ENCODE measurements at regions of chr1 and their contacts with region 1.

Region 1: GRCh38 chr1:237864338-237865244 is 26.1 kb downstream of the ZP4 start:
- DNase-seq: peak; percentile 85
- H3K4me3 Mint-ChIP-seq: peak overlapping the region; percentile 68
- H3K27ac Mint-ChIP-seq: peak overlapping the region; percentile 55
- H3K4me1 Mint-ChIP-seq: peaks cover 21% of the 10 kb centered on the region
- H3K27me3 Mint-ChIP-seq: no peaks in the 10 kb centered on the region
- CTCF ChIP-seq: peak; percentile 98

Region 2: GRCh38 chr1:237913362-237913761 is 48.8 kb after region 1 on chr1:
- CTCF ChIA-PET with region 1: interaction called, 6 read pairs
- intact Hi-C with region 1: loop called (anchors 1 kb)
- DNase-seq: no peak
- H3K4me3 Mint-ChIP-seq: no peak overlapping the region
- H3K27ac Mint-ChIP-seq: no peak overlapping the region
- H3K4me1 Mint-ChIP-seq: no peaks in the 10 kb centered on the region
- H3K27me3 Mint-ChIP-seq: no peaks in the 10 kb centered on the region
- CTCF ChIP-seq: no peak

Region 3: DNA sequence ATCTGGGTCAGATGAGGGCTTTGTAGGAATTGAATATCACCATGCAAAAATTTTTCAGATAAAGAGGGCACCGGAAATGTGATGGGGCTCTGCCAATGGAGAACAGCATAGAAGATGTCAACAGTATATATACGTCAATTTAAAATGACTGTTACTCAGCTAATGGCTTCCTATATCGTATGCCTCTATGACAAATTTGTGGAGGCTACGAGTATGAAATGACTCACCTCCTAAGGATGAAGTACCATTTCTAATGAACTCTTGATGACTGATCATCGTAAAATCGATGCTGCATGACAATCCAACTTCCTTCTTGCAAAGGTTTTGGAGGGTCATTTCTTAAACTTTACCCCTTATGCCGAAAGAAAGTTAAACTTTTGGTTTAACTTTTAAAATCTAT is 476.4 kb after region 1 on chr1:
- CTCF ChIA-PET with region 1: no interaction called
- intact Hi-C with region 1: loop called (anchors 10 kb)
- DNase-seq: no peak
- H3K4me3 Mint-ChIP-seq: no peak overlapping the region
- H3K27ac Mint-ChIP-seq: peak overlapping the region; percentile 24
- H3K4me1 Mint-ChIP-seq: peaks cover 21% of the 10 kb centered on the region
- H3K27me3 Mint-ChIP-seq: no peaks in the 10 kb centered on the region
- CTCF ChIP-seq: no peak

Region 4: GRCh38 chr1:238951809-238952208 is 1087.2 kb after region 1 on chr1:
- CTCF ChIA-PET with region 1: interaction called, 4 read pairs
- intact Hi-C with region 1: loop called (anchors 5 kb)
- DNase-seq: peak; percentile 63
- H3K4me3 Mint-ChIP-seq: no peak overlapping the region
- H3K27ac Mint-ChIP-seq: peak overlapping the region; percentile 62
- H3K4me1 Mint-ChIP-seq: peaks cover 16% of the 10 kb centered on the region
- H3K27me3 Mint-ChIP-seq: no peaks in the 10 kb centered on the region
- CTCF ChIP-seq: peak; percentile 61

Measured in Calu3 (cell line).